ENCODE measurements at regions of chr9 and their contacts with region 1.

Region 1: DNA sequence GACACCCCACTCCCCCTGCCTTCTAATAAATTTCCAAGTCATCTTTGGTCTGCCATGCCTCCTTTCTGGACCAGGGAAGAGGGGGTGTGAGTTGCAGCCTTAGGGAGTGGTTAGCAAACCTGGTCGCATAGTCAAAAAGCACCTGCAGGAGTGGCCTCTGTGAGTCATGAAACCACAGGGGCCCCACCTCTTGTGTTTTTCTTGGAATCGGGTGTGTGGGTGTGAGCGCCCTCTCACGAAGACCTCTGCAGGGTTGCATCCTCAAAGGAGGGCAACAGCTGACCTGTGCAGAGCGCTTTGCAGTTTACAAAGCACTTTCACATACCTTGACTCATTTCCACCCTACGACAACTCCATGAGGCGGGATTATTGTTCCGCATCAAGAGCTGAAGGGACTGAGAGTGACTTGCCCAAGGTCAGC is 36.8 kb upstream of the TEX48 start:
- DNase-seq: peak; percentile 99
- ATAC-seq: peak; percentile 94
- H3K4me3 Mint-ChIP-seq: peak overlapping the region; percentile 50
- H3K27ac Mint-ChIP-seq: peak overlapping the region; percentile 94
- H3K4me1 Mint-ChIP-seq: peaks cover 63% of the 10 kb centered on the region
- H3K27me3 Mint-ChIP-seq: peaks cover 8% of the 10 kb centered on the region

Region 2: GRCh38 chr9:114738581-114739316 is 19.9 kb after region 1 on chr9:
- CTCF ChIA-PET with region 1: interaction called, 18 read pairs
- DNase-seq: peak; percentile 84
- ATAC-seq: peak; percentile 83
- H3K4me3 Mint-ChIP-seq: no peak overlapping the region
- H3K27ac Mint-ChIP-seq: peak overlapping the region; percentile 89
- H3K4me1 Mint-ChIP-seq: peaks cover 58% of the 10 kb centered on the region
- H3K27me3 Mint-ChIP-seq: peaks cover 5% of the 10 kb centered on the region

Region 3: DNA sequence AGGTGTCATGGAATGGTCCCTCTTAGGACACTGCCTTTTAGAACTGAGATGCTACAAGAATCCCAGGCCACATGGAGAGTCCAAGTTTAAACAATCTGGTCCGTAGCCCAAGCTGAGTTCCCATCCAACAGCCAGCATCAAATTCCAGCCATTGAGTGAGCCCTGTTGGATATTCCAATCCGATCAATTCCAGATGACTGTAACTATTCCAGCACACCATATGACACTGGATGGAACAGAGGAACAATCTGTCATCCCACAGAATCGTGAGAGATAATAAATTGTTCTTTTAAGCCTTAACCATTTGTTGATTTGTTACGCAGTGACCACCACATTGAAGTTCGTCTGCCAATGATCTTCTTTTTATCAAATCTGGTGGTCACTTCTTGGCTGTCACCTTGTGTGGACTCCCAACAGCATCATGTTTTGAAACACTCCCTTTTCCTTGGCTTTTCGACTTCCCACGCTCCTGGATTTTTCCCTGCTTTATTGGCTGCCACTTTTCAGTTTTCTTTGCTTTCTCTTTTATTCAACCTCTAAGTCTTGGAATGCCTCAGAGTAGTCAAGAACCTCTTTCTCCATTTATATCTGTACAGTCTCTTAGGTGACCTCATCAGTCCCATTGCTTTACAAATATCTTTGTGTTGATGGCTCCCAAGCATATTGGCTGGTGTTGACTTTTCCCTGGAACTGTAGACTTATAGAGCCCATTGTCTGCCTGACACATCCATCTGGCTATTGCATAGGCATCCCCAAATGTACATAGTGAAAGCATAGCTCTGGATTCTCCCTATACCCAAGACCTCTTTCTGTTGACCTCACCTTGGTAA is 40.9 kb after region 1 on chr9:
- CTCF ChIA-PET with region 1: no interaction called
- DNase-seq: no peak
- ATAC-seq: no peak
- H3K4me3 Mint-ChIP-seq: no peak overlapping the region
- H3K27ac Mint-ChIP-seq: no peak overlapping the region
- H3K4me1 Mint-ChIP-seq: peaks cover 16% of the 10 kb centered on the region
- H3K27me3 Mint-ChIP-seq: peaks cover 13% of the 10 kb centered on the region

Region 4: GRCh38 chr9:114779352-114779845 is 60.6 kb after region 1 on chr9:
- CTCF ChIA-PET with region 1: no interaction called
- DNase-seq: no peak
- ATAC-seq: no peak
- H3K4me3 Mint-ChIP-seq: no peak overlapping the region
- H3K27ac Mint-ChIP-seq: no peak overlapping the region
- H3K4me1 Mint-ChIP-seq: peaks cover 22% of the 10 kb centered on the region
- H3K27me3 Mint-ChIP-seq: peaks cover 30% of the 10 kb centered on the region

Region 5: GRCh38 chr9:114914139-114914538 is 195.3 kb after region 1 on chr9:
- CTCF ChIA-PET with region 1: no interaction called
- DNase-seq: no peak
- ATAC-seq: no peak
- H3K4me3 Mint-ChIP-seq: no peak overlapping the region
- H3K27ac Mint-ChIP-seq: no peak overlapping the region
- H3K4me1 Mint-ChIP-seq: peaks cover 54% of the 10 kb centered on the region
- H3K27me3 Mint-ChIP-seq: no peaks in the 10 kb centered on the region

Measured in activated CD8-positive, alpha-beta memory T cell treated with anti-CD3 and anti-CD28 coated beads, Interleukin-2, amount 10 ng/mL, durations not matched to agents 7 days and 5 days (primary cell).